BJ (cell line): ENCODE measurements at regions of chr1 and their contacts with region 1.

Region 1: GRCh38 chr1:167791281-167792187 is 69.8 kb downstream of the MPZL1 start:
- DNase-seq: peak; percentile 93
- H3K4me3 ChIP-seq: no peak overlapping the region
- H3K27me3 ChIP-seq: no peaks in the 10 kb centered on the region
- CTCF ChIP-seq: no peak

Region 2: DNA sequence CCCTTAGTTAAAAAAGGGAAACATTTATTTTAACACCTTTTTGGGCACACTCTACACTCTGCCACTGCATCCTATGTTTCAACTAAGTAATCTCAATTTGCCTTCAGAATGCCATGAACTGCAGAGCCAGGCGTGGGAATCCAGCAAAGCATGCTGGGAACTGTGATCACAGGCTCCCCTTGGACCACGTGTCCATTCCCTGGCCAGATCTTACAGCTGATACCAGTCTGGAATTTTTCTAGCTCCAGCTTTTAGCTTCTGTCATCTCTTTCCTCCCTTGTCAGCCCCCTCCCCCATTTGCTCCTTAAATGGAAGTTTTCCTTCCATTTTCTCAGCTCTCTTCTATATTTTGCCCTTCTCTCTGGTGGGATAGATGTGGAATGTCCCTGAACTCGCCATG is 132.1 kb before region 1 on chr1:
- CTCF ChIA-PET with region 1: no interaction called
- POLR2A ChIA-PET with region 1: interaction called, 11 read pairs
- DNase-seq: no peak
- H3K4me3 ChIP-seq: no peak overlapping the region
- H3K27me3 ChIP-seq: peaks cover 5% of the 10 kb centered on the region; the same call in 1 of the 2 replicates
- CTCF ChIP-seq: no peak

Region 3: DNA sequence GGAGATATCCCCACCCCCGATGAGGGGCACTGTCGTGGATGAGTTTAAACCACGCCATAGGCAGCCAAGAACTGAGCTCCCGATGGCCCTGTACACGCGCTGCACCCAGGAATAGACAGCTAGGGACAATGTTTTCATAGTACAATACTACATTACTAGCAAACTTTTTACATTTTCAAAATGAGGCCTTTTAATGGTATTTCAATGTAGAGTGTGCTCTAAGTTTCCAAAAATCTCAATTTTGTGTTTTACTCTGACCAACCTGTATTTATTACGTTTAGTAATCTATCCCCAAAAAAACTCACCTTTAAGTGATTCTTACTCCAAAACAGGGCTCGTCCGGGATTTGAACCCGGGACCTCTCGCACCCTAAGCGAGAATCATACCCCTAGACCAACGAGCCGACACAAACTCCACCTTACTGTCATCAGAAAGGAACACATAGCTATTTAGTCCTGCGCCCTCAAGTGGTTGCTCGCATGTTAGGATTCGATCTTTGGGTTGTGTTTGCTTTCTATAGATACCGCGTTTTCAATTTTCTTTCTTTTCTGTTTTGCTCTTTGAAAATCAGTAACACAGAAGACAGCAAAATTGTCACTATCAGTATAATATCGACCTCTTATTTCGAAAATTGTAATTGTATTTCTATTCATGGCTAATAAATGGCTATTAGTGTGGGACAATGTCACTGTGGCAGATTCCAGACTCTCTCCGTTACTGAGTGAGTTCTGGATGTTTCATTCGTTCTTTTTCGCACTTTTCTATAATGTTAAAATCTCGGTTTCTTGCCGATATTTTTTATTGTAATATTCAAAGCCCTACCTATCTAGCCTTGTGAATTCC is 76.2 kb before region 1 on chr1:
- CTCF ChIA-PET with region 1: interaction called, 11 read pairs
- POLR2A ChIA-PET with region 1: no interaction called
- DNase-seq: peak; percentile 37
- H3K4me3 ChIP-seq: peak overlapping the region; percentile 77
- H3K27me3 ChIP-seq: peaks cover 3% of the 10 kb centered on the region; the same call in 1 of the 2 replicates
- CTCF ChIP-seq: peak; percentile 79

Region 4: DNA sequence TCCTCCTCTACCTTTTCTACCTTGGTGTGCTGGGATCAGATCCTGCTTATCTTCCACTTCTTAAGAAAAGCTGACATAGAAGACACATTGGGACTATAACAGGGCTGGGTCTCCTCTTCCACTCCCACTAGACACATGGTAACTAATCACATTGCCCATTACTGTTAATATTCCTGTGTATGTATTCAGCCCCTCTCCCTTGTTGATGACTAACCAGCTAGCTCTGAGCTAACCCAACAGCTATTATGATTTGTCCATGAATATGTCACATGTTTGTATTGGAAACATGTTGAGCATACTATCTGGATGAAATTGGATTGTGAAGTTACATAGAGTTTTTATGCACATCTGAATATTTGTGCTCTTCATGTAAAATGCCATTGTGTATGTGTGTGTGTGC is 16.8 kb before region 1 on chr1:
- CTCF ChIA-PET with region 1: interaction called, 4 read pairs
- POLR2A ChIA-PET with region 1: interaction called, 25 read pairs
- DNase-seq: no peak
- H3K4me3 ChIP-seq: no peak overlapping the region
- H3K27me3 ChIP-seq: no peaks in the 10 kb centered on the region
- CTCF ChIP-seq: no peak